Caco-2 (cell line): ENCODE measurements at regions of chr18 and their contacts with region 1.

Region 1: GRCh38 chr18:21914739-21915319 is 174.2 kb downstream of the MIB1 start:
- DNase-seq: peak; percentile 69 to 73
- H3K4me3 ChIP-seq: no peak overlapping the region
- H3K4me3 Mint-ChIP-seq: no peak overlapping the region
- H3K27ac Mint-ChIP-seq: no peak overlapping the region
- H3K4me1 ChIP-seq: peaks cover 29% of the 10 kb centered on the region
- H3K4me1 Mint-ChIP-seq: peaks cover 24% of the 10 kb centered on the region
- H3K27me3 ChIP-seq: no peaks in the 10 kb centered on the region
- H3K27me3 Mint-ChIP-seq: no peaks in the 10 kb centered on the region
- CTCF ChIP-seq: peak; percentile 78 to 84

Region 2: DNA sequence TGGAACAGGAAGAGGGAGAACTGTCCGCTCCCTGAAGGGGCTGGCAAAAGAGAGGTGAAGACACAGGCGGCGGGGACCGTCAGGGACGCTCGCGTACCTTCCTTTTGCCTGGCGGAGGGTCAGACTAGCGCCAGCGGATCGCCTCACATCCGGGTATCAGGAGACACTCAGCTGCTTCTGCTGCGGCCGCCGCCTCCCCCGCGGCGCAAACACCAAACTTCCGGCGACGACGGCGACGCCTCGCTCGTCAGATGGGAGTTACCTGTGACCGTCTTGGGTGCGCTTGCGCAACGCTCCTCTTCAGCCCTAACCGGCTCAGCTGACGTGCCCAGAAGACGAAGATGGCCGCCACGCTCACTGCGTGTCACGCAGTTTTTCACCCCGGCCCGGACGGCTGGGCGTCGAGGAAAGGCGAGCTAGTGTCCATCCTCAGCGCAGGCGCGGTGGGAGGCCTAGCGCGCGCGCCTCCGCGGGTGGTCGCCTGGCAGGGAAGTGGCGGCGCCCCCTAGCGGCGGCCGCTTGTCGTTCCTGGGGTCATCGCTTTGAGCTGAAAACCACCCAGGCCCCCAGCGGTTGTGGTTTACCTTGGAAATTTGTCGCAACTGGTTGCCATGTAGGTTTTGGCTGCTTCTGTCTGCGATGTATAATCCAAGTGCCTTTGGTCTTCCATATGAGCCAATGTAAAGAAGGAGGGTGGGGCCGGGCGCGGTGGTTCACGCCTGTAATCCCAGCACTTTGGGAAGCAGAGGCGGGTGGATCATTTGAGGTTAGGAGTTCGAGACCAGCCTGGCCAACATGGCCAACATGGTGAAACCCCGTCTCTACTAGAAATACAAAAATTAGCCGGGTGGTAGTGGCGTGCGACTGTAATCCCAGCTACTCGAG is 314.1 kb before region 1 on chr18 and contains the start of gene ESCO1:
- CTCF ChIA-PET with region 1: no interaction called
- POLR2A ChIA-PET with region 1: no interaction called
- intact Hi-C with region 1: no loop called
- DNase-seq: peak; percentile 98 to 99
- H3K4me3 ChIP-seq: peak within 1 kb of the TSS; percentile 72
- H3K4me3 Mint-ChIP-seq: peak within 1 kb of the TSS; percentile 96
- H3K27ac Mint-ChIP-seq: peak within 1 kb of the TSS; percentile 99
- H3K4me1 ChIP-seq: peaks cover 4% of the 10 kb centered on the region; the same call in 1 of the 2 replicates
- H3K4me1 Mint-ChIP-seq: peaks cover 6% of the 10 kb centered on the region
- H3K27me3 ChIP-seq: no peaks in the 10 kb centered on the region
- H3K27me3 Mint-ChIP-seq: no peaks in the 10 kb centered on the region
- CTCF ChIP-seq: peak; percentile 85 to 93
- total RNA-seq, gene ESCO1: 23.0 and 24.2 TPM in 2 replicates

Region 3: DNA sequence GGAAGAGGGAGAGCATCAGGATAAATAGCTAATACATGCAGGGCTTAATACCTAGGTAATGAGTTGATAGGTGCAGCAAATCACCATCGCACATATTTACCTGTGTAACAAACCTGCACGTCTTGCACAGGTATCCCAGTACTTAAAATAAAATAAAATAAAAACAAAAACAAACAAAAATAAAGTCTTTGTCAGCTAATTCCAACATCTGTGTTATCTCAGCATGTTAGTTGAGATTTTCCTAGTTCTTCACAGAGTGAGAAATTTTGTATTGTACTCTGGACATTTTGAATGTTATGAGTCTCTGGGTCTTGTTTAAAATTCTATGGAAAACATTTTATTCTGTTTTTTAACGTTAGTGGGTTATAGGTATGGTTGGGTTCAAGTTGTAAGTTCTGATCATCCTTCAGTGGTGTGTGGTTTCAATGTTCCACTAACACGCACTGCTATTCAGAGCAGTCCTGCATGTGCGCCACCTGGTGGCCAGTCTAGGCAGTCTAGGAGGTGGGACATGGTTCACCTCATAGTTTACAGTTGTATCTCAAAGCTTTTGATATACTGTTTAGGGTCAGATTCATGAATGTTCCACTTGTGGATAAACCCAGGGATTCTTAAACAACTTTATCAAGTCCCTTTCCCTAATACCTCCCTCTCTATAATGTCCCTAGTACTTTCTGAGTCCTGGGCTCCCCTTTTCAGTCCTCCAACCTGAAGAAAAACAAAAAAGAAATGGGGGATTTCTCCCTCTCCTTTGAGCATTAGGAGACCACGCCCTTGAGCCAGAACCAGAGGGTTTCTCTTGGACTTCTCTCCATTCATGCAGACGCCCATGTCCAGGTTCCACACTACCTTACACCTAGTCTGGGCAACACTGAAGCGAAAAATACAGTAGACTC is 41.2 kb after region 1 on chr18:
- CTCF ChIA-PET with region 1: no interaction called
- POLR2A ChIA-PET with region 1: no interaction called
- intact Hi-C with region 1: loop called (anchors 5 kb)
- DNase-seq: peak; percentile 79 to 84
- H3K4me3 ChIP-seq: no peak overlapping the region
- H3K4me3 Mint-ChIP-seq: no peak overlapping the region
- H3K27ac Mint-ChIP-seq: no peak overlapping the region
- H3K4me1 ChIP-seq: peaks cover 6% of the 10 kb centered on the region; the same call in 1 of the 2 replicates
- H3K4me1 Mint-ChIP-seq: peaks cover 14% of the 10 kb centered on the region
- H3K27me3 ChIP-seq: no peaks in the 10 kb centered on the region
- H3K27me3 Mint-ChIP-seq: no peaks in the 10 kb centered on the region
- CTCF ChIP-seq: peak; percentile 86 to 90

Region 4: DNA sequence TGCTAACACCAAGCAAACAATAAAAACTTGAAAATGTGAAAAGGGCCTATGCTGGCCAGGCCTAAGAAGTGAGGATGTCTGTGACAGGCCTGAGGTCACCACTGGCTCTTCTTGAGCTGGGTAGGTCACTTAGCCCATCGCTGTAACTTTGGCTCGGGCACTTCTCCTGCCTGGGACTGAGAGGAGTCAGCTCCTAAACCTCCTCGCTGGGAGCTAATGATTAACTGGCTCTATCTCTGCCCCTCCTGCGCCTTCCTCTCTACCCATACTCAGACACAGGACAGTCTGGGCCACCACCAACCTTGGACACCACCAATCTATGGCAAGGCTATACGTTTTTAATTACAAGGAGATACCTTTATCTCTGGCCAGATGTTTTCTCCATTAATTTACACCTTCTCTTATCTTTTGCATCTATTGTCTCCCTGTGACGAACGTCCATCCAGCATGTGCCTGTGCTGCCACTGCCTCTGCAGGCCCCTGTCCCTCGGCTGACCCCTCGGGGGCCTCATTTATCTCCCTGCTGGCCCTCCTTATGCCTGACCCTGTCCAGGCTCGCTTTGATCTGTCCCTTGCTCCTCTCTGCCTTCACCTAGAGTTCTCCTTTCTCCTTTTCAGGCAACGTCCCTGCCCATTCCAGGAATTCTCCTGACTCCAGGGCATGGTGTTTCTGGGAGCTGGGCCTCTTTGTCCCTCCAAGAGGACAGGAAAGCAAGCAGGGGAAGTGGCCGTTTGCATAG is 105.5 kb after region 1 on chr18:
- CTCF ChIA-PET with region 1: no interaction called
- POLR2A ChIA-PET with region 1: no interaction called
- intact Hi-C with region 1: no loop called
- DNase-seq: peak; percentile 89 to 97
- H3K4me3 ChIP-seq: no peak overlapping the region
- H3K4me3 Mint-ChIP-seq: peak overlapping the region; percentile 51
- H3K27ac Mint-ChIP-seq: peak overlapping the region; percentile 59
- H3K4me1 ChIP-seq: peaks cover 66% of the 10 kb centered on the region
- H3K4me1 Mint-ChIP-seq: peaks cover 39% of the 10 kb centered on the region
- H3K27me3 ChIP-seq: no peaks in the 10 kb centered on the region
- H3K27me3 Mint-ChIP-seq: no peaks in the 10 kb centered on the region
- CTCF ChIP-seq: no peak

Region 5: GRCh38 chr18:22032392-22032961 is 117.6 kb after region 1 on chr18:
- CTCF ChIA-PET with region 1: no interaction called
- POLR2A ChIA-PET with region 1: no interaction called
- intact Hi-C with region 1: loop called (anchors 10 kb)
- DNase-seq: peak; percentile 83 to 87
- H3K4me3 ChIP-seq: no peak overlapping the region
- H3K4me3 Mint-ChIP-seq: peak overlapping the region; percentile 57
- H3K27ac Mint-ChIP-seq: peak overlapping the region; percentile 95
- H3K4me1 ChIP-seq: peaks cover 44% of the 10 kb centered on the region
- H3K4me1 Mint-ChIP-seq: peaks cover 31% of the 10 kb centered on the region
- H3K27me3 ChIP-seq: no peaks in the 10 kb centered on the region; the same call in 1 of the 2 replicates
- H3K27me3 Mint-ChIP-seq: no peaks in the 10 kb centered on the region
- CTCF ChIP-seq: no peak

Region 6: GRCh38 chr18:22185273-22185672 is 270.4 kb after region 1 on chr18:
- CTCF ChIA-PET with region 1: no interaction called
- POLR2A ChIA-PET with region 1: no interaction called
- intact Hi-C with region 1: loop called (anchors 5 kb)
- DNase-seq: no peak
- H3K4me3 ChIP-seq: no peak overlapping the region
- H3K4me3 Mint-ChIP-seq: peak overlapping the region; percentile 37
- H3K27ac Mint-ChIP-seq: peak overlapping the region; percentile 59
- H3K4me1 ChIP-seq: peaks cover 80% of the 10 kb centered on the region
- H3K4me1 Mint-ChIP-seq: peaks cover 21% of the 10 kb centered on the region
- H3K27me3 ChIP-seq: no peaks in the 10 kb centered on the region
- H3K27me3 Mint-ChIP-seq: no peaks in the 10 kb centered on the region
- CTCF ChIP-seq: no peak

Region 7: DNA sequence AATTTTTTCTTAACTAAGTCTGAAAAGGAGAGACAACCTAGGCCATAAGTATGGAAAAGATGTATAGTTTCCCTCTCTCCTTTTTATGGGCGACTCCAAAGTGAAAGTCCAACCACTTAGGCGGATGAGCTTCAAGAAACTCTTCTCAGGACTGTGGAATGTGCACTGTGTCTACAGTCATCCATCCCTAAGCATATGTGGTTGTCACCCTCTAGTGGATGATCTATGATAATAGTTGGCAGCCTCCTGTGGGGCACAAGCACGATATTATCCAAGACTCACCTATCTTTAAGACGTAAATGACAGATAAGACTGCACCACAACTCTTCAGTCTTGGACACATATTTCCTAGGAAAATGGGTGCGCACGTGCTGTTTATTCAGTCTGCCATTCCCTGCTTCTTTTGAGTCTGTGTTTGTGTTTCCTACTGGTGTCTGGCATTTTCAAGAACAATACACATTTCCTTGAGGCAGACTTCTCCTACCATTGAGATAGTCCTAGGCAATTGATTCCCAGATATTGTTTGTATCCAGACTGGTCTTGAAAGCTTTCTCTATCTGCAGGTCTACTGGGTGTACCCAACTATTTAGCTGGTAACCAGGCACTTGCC is 648.4 kb after region 1 on chr18:
- CTCF ChIA-PET with region 1: interaction called, 7 read pairs
- POLR2A ChIA-PET with region 1: no interaction called
- intact Hi-C with region 1: loop called (anchors 1 kb)
- DNase-seq: peak; percentile 68 to 75
- H3K4me3 ChIP-seq: no peak overlapping the region
- H3K4me3 Mint-ChIP-seq: no peak overlapping the region
- H3K27ac Mint-ChIP-seq: no peak overlapping the region
- H3K4me1 ChIP-seq: peaks cover 3% of the 10 kb centered on the region; the same call in 1 of the 2 replicates
- H3K4me1 Mint-ChIP-seq: peaks cover 9% of the 10 kb centered on the region
- H3K27me3 ChIP-seq: no peaks in the 10 kb centered on the region
- H3K27me3 Mint-ChIP-seq: no peaks in the 10 kb centered on the region
- CTCF ChIP-seq: peak; percentile 68 to 70